Posterior vena cava (tissue), 2 donors: ENCODE measurements at regions of chr10 and their contacts with region 1.

Region 1: GRCh38 chr10:7872041-7872442 is 53.7 kb downstream of the TAF3 start:
- DNase-seq: no peak

Region 2: GRCh38 chr10:7722927-7723529 is 149.0 kb before region 1 on chr10:
- intact Hi-C with region 1: no loop called
- DNase-seq: no peak

Region 3: GRCh38 chr10:8221451-8221850 is 349.4 kb after region 1 on chr10:
- intact Hi-C with region 1: no loop called
- DNase-seq: no peak

Region 4: GRCh38 chr10:9209105-9209798 is 1337.2 kb after region 1 on chr10:
- intact Hi-C with region 1: loop called in 1 of 2 experiments (anchors 5 kb)
- DNase-seq: peak; percentile 81